Transverse colon (tissue), 4 donors: ENCODE measurements at regions of chr19 and their contacts with region 1.

Region 1: GRCh38 chr19:10533646-10534386 is 9.9 kb upstream of the ATG4D start:
- DNase-seq: no peak
- H3K4me3 ChIP-seq: no peak overlapping the region
- H3K27ac ChIP-seq: peak overlapping the region in 1 of 4 donors; percentile 5
- H3K4me1 ChIP-seq: no peaks in the 10 kb centered on the region
- H3K27me3 ChIP-seq: peaks cover 2% of the 10 kb centered on the region
- CTCF ChIP-seq: no peak
- EP300 ChIP-seq: no peak
- POLR2A ChIP-seq: no peak

Region 2: DNA sequence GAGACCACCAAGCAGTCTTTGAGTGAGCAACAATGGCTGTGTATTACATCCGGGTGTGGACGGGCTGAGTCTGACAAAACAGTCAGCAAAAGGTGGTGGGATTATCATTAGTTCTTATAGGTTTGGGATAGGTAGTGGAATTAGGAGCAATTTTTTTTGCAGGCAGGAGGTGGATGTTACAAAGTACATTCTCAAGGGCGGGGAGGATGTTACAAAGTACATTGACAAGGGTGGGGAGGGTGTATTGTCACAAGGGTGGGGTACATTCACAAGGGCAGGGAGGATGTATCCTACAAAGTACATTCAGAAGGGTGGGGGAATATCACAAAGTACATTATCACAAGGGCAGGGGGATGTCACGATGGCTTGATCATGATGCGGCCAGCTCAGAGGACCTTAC is 897.8 kb before region 1 on chr19:
- in situ Hi-C with region 1: no loop called
- intact Hi-C with region 1: loop called (anchors 5 kb)
- DNase-seq: no peak
- H3K4me3 ChIP-seq: no peak overlapping the region
- H3K27ac ChIP-seq: no peak overlapping the region
- H3K4me1 ChIP-seq: no peaks in the 10 kb centered on the region
- H3K27me3 ChIP-seq: no peaks in the 10 kb centered on the region
- CTCF ChIP-seq: no peak
- EP300 ChIP-seq: no peak
- POLR2A ChIP-seq: no peak

Region 3: DNA sequence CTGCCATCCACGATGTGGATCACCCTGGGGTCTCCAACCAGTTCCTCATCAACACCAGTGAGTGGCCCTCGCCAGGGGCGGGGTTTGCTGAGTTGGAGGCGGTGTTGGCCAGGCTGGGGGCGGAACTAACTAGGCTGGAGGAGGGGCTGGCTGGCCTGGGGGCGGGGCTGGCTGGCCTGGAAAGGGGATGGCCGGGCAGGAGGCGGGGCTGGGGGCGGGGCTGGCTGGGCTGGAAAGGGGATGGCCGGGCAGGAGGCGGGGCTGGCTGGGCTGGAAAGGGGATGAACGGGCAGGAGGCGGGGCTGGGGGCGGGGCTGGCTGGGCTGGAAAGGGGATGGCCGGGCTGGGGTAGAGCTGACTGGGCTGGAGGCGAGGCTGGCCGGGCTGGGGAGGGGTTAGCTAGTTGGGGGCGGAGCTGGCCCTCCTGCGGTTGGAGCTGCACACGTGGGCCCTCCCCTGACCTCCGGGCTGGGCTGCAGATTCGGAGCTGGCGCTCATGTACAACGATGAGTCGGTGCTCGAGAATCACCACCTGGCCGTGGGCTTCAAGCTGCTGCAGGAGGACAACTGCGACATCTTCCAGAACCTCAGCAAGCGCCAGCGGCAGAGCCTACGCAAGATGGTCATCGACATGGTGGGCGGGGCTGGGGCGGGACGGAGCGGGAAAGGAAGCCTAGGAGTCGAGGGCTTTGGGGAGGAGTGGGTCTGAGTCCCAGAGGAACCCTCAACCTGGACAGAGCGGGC is 72.6 kb before region 1 on chr19:
- in situ Hi-C with region 1: no loop called
- intact Hi-C with region 1: no loop called
- DNase-seq: peak; percentile 96
- H3K4me3 ChIP-seq: peak overlapping the region in 3 of 4 donors; percentile 13 to 46 (median 18)
- H3K27ac ChIP-seq: peak overlapping the region in 3 of 4 donors; percentile 1 to 44 (median 6)
- H3K4me1 ChIP-seq: peaks cover 5 to 7% (median 5%) of the 10 kb centered on the region in 4 donors
- H3K27me3 ChIP-seq: no peaks in the 10 kb centered on the region
- CTCF ChIP-seq: no peak
- EP300 ChIP-seq: no peak
- POLR2A ChIP-seq: no peak